Mammary epithelial cell (primary cell): ENCODE measurements at regions of chr1 and their contacts with region 1.

Region 1: GRCh38 chr1:25099343-25099951 is 132.9 kb downstream of the SYF2 start:
- DNase-seq: no peak
- H3K4me3 ChIP-seq: no peak overlapping the region
- H3K27ac ChIP-seq: no peak overlapping the region
- H3K4me1 ChIP-seq: no peaks in the 10 kb centered on the region
- H3K27me3 ChIP-seq: peaks cover 2% of the 10 kb centered on the region
- CTCF ChIP-seq: no peak

Region 2: DNA sequence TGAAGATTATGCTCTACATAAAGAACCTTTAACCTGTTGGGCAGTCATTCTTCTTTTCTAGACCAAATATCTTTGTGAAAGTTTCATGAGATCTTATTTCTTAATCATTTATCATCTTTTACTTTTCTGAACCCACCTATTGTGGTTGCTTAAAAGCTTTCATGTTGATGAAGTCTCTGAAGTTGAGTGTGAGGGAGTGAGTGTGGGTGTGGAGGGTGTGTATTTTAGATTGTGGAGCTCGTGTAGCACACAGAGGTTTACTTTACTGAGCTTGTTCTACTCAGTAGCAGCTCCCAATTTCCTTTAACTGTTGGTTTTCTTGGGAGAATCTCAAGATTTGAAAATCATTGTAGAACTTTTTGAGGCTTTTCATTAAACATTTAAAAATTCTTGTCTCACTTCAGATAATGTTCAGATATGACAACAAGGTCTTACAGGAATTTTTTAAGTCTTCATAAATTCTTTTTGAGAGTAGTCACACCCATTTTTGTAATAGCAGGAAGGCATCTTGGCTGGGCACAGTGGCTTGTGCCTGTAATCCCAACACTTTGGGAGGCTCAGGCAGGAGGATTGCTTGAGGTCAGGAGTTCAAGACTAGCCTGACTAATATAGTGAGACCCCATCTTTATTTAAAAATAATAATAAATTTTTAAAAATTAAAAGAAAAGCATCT is 439.3 kb before region 1 on chr1:
- CTCF ChIA-PET with region 1: no interaction called
- dilution Hi-C with region 1: loop called (anchors 10 kb)
- in situ Hi-C with region 1: no loop called
- intact Hi-C with region 1: no loop called
- DNase-seq: no peak
- H3K4me3 ChIP-seq: no peak overlapping the region
- H3K27ac ChIP-seq: no peak overlapping the region
- H3K4me1 ChIP-seq: peaks cover 4% of the 10 kb centered on the region
- H3K27me3 ChIP-seq: no peaks in the 10 kb centered on the region
- CTCF ChIP-seq: no peak

Region 3: GRCh38 chr1:24847995-24848881 is 251.2 kb before region 1 on chr1:
- CTCF ChIA-PET with region 1: no interaction called
- dilution Hi-C with region 1: no loop called
- in situ Hi-C with region 1: loop called in 1 of 2 experiments (anchors 10 kb)
- intact Hi-C with region 1: loop called (anchors 1 kb)
- DNase-seq: peak; percentile 54
- H3K4me3 ChIP-seq: peak overlapping the region; percentile 23 to 41 (median 41)
- H3K27ac ChIP-seq: no peak overlapping the region
- H3K4me1 ChIP-seq: peaks cover 11% of the 10 kb centered on the region
- H3K27me3 ChIP-seq: no peaks in the 10 kb centered on the region
- CTCF ChIP-seq: peak; percentile 58 to 95

Region 4: GRCh38 chr1:25037174-25038074 is 62.0 kb before region 1 on chr1:
- CTCF ChIA-PET with region 1: no interaction called
- dilution Hi-C with region 1: loop called (anchors 10 kb)
- in situ Hi-C with region 1: no loop called
- intact Hi-C with region 1: loop called (anchors 1 kb)
- DNase-seq: no peak
- H3K4me3 ChIP-seq: no peak overlapping the region
- H3K27ac ChIP-seq: no peak overlapping the region
- H3K4me1 ChIP-seq: peaks cover 5% of the 10 kb centered on the region
- H3K27me3 ChIP-seq: no peaks in the 10 kb centered on the region
- CTCF ChIP-seq: peak; percentile 65 to 68

Region 5: GRCh38 chr1:25042331-25043227 is 56.9 kb before region 1 on chr1:
- CTCF ChIA-PET with region 1: no interaction called
- dilution Hi-C with region 1: loop called (anchors 10 kb)
- in situ Hi-C with region 1: no loop called
- intact Hi-C with region 1: loop called (anchors 1 kb)
- DNase-seq: peak; percentile 73
- H3K4me3 ChIP-seq: no peak overlapping the region
- H3K27ac ChIP-seq: no peak overlapping the region
- H3K4me1 ChIP-seq: peaks cover 11% of the 10 kb centered on the region
- H3K27me3 ChIP-seq: no peaks in the 10 kb centered on the region
- CTCF ChIP-seq: no peak